HCT116 (cell line): ENCODE measurements at regions of chr6 and their contacts with region 1.

Region 1: DNA sequence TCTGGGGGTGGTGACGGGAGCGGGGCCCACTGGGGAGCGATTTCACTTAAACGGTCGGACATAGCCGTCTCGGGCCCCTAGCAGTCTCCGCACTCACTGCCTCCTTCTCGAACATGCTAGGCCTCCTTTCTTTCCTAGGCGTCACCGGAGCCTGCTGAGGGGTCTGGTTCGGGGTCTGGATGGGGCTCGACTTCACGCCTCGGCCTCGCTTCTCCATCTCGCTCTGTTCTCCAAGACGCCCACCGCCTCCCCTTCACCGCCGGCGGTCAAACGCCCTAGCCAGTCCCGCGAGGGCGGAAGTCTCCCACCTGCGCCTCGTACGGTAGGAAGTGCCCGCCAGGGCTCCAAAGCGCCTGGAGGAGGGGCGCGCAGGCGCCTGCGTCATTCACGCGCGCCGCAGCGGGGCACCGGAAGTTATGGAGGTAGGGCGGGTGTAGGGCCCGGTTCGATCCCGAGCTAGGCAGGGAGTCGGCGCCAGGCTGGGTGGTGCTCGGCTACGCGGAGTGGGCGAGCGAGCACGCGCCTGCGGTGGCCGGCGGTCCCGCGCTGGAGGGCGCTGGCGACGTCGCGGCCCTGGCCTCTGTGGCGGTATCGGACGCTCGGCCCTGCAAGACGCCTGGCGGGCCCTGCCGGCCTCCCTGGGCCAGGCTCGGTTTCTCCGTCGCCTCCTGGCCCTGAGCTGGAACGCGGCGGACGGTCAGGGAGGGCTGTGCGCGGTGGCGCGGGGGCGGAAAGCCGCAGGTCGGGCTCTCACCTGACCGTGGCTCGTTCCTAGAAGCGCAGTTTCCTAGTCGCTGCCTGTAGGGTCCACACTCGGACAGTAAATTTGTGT is at the starts of genes DYNLT2 and ERMARD:
- DNase-seq: peak; percentile 88
- ATAC-seq: peak; percentile 91
- H3K4me3 ChIP-seq: peak within 1 kb of the TSS; percentile 69 to 84
- H3K27ac ChIP-seq: peak within 1 kb of the TSS; percentile 88
- H3K4me1 ChIP-seq: peaks cover 7 to 19% of the 10 kb centered on the region in 2 experiments; a peak in 3 of 4 replicates
- H3K27me3 ChIP-seq: no peaks in the 10 kb centered on the region
- CTCF ChIP-seq: peak in 1 of 3 experiments; percentile 14; a peak in 1 of 6 replicates
- POLR2A ChIP-seq: peak; percentile 80
- RAD21 ChIP-seq: no peak
- total RNA-seq, gene DYNLT2: 1.5 TPM
- total RNA-seq, gene ERMARD: 24.7 TPM

Region 2: GRCh38 chr6:169571123-169571962 is 180.1 kb before region 1 on chr6:
- CTCF ChIA-PET with region 1: no interaction called
- POLR2A ChIA-PET with region 1: no interaction called
- RAD21 ChIA-PET with region 1: no interaction called
- intact Hi-C with region 1: no loop called
- DNase-seq: no peak
- ATAC-seq: no peak
- H3K4me3 ChIP-seq: no peak overlapping the region
- H3K27ac ChIP-seq: 0 out of 2 replicates have a peak overlapping the region, but pooled peaks have one; percentile 16
- H3K4me1 ChIP-seq: peaks cover 0 to 9% of the 10 kb centered on the region in 2 experiments; a peak in 1 of 4 replicates
- H3K27me3 ChIP-seq: no peaks in the 10 kb centered on the region
- CTCF ChIP-seq: no peak
- POLR2A ChIP-seq: no peak
- RAD21 ChIP-seq: no peak

Region 3: DNA sequence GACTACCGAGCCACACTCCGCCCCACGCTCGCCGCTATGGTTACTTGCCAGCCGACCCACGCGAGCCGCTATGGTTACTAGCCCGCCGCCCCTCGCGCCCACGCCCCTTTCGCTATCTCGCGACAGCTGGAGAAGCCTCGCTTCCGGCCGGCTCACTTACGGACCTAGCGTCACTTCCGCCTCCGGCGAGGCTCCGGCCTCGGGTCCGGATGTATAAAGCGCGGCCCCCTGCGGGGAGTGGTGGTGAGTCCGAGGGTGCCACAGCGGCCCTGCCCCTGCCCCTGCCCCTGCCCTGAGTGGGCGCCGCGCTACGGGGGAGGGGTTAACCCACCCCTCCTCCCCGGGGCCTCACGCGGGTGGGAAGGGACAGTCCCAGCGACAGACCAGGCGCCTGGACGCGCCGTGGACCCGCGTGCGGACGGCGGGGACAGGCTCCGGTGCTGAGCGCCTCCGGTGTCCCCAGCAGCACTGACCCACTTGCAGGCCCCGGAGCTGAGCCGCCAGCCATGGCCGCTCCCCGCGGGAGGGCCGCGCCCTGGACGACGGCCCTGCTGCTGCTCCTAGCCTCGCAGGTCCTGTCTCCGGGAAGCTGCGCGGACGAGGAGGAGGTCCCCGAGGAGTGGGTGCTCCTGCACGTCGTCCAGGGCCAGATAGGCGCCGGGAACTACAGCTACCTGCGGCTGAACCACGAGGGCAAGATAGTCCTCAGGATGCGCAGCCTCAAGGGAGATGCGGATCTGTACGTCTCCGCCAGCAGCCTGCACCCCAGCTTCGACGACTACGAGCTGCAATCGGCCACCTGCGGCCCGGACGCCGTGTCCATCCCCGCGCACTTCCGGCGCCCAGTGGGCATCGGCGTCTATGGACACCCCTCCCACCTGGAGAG is 49.3 kb before region 1 on chr6 and contains the starts of genes C6orf120 and WDR27:
- CTCF ChIA-PET with region 1: no interaction called
- POLR2A ChIA-PET with region 1: no interaction called
- RAD21 ChIA-PET with region 1: no interaction called
- intact Hi-C with region 1: loop called (anchors 2 kb)
- DNase-seq: peak; percentile 91
- ATAC-seq: peak; percentile 90
- H3K4me3 ChIP-seq: peak within 1 kb of the TSS; percentile 94 to 98
- H3K27ac ChIP-seq: peak within 1 kb of the TSS; percentile 99
- H3K4me1 ChIP-seq: peaks cover 19 to 20% of the 10 kb centered on the region in 2 experiments
- H3K27me3 ChIP-seq: no peaks in the 10 kb centered on the region
- CTCF ChIP-seq: no peak
- POLR2A ChIP-seq: peak; percentile 52
- RAD21 ChIP-seq: no peak
- total RNA-seq, gene C6orf120: 20.6 TPM
- total RNA-seq, gene WDR27: 60.6 TPM

Region 4: DNA sequence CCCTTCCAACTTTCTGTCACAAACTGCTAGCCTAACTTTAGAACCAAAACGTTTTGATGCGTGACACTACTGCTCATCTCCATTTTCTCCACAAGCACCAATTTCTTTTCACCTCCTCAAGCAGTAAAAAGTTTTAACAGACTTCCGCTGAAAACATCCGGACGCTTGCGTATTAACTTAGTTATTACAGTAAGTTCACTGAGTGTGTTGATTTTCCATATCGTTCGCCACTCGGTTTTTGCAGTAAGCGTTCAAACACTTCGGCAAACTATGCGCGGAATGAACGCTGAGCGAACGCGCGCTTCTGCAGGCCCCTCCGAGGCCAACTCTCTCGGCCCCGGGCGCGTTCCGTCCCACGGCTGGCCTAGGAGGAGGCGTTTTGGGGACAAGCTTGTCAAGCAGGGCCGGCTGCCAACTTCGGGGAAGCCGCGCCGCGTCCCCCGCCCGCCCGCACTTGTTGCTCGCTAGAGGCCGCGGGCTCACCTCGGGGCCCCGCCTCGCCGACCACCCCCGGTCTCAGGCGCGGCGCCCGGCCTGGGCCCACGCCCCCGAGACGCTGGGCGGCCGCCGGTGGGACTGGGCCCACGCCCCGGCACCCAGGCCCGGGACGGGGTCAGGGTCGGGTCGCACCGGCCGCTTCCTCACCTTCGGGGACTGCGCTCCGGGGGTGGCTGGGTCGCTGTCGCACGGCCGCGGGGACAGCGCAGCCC is 28.1 kb before region 1 on chr6:
- CTCF ChIA-PET with region 1: no interaction called
- POLR2A ChIA-PET with region 1: interaction called, 3 read pairs
- RAD21 ChIA-PET with region 1: no interaction called
- intact Hi-C with region 1: loop called (anchors 2 kb)
- DNase-seq: no peak
- ATAC-seq: peak; percentile 43
- H3K4me3 ChIP-seq: peak overlapping the region; percentile 70 to 90
- H3K27ac ChIP-seq: peak overlapping the region; percentile 84
- H3K4me1 ChIP-seq: peaks cover 19 to 27% of the 10 kb centered on the region in 2 experiments
- H3K27me3 ChIP-seq: no peaks in the 10 kb centered on the region
- CTCF ChIP-seq: no peak
- POLR2A ChIP-seq: no peak
- RAD21 ChIP-seq: no peak

Region 5: GRCh38 chr6:170554013-170554795 is 802.7 kb after region 1 on chr6 and contains the start of gene TBP:
- CTCF ChIA-PET with region 1: no interaction called
- POLR2A ChIA-PET with region 1: no interaction called
- RAD21 ChIA-PET with region 1: no interaction called
- intact Hi-C with region 1: loop called (anchors 1 kb)
- DNase-seq: peak; percentile 99
- ATAC-seq: peak; percentile 93
- H3K4me3 ChIP-seq: peak within 1 kb of the TSS; percentile 91 to 99
- H3K27ac ChIP-seq: peak within 1 kb of the TSS; percentile 79
- H3K4me1 ChIP-seq: peaks cover 12 to 16% of the 10 kb centered on the region in 2 experiments
- H3K27me3 ChIP-seq: no peaks in the 10 kb centered on the region
- CTCF ChIP-seq: no peak
- POLR2A ChIP-seq: peak; percentile 62
- RAD21 ChIP-seq: no peak
- total RNA-seq, gene TBP: 22.7 TPM